ENCODE measurements at regions of chr3 and their contacts with region 1.

Region 1: DNA sequence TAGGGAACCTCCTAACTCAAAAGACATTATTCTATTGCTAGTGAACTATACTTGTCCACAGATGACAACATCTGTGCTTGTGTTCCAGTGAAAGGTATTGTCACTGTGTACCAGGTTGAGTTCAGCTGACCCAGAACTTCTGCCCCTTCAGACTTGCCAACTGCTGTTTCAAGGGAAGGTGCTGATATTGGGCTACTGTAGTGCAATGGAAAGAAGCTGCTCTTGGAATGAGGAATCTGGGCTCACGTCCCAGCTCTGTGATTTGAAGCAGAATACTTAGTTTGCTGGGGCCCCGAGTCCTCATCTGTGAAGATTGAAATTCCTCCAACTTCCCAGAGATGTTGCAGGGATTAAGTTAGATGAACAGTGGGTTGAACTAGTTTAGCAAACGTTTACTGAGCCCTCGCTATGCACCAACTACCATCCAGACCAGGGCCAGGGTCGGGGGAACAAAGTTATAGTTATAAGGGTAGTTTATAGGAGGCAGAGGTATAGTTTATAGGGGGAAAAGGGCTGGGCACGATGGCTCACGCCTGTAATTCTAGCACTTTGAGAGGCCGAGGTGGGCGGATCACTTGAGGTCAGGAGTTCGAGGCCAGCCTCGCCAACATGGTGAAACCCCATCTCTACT is 15.9 kb upstream of the UMPS start:
- DNase-seq: no peak
- H3K4me3 ChIP-seq: no peak overlapping the region
- H3K4me3 Mint-ChIP-seq: no peak overlapping the region
- H3K27ac Mint-ChIP-seq: peak overlapping the region; percentile 73
- H3K4me1 ChIP-seq: peaks cover 17% of the 10 kb centered on the region
- H3K4me1 Mint-ChIP-seq: peaks cover 25% of the 10 kb centered on the region
- H3K27me3 ChIP-seq: no peaks in the 10 kb centered on the region
- H3K27me3 Mint-ChIP-seq: no peaks in the 10 kb centered on the region
- CTCF ChIP-seq: no peak

Region 2: GRCh38 chr3:123960781-123961507 is 753.4 kb before region 1 on chr3 and contains the start of gene CCDC14:
- CTCF ChIA-PET with region 1: interaction called, 10 read pairs
- POLR2A ChIA-PET with region 1: no interaction called
- intact Hi-C with region 1: no loop called
- DNase-seq: peak; percentile 95 to 98
- H3K4me3 ChIP-seq: peak within 1 kb of the TSS; percentile 66
- H3K4me3 Mint-ChIP-seq: peak within 1 kb of the TSS; percentile 90
- H3K27ac Mint-ChIP-seq: peak within 1 kb of the TSS; percentile 95
- H3K4me1 ChIP-seq: no peaks in the 10 kb centered on the region
- H3K4me1 Mint-ChIP-seq: no peaks in the 10 kb centered on the region
- H3K27me3 ChIP-seq: no peaks in the 10 kb centered on the region
- H3K27me3 Mint-ChIP-seq: no peaks in the 10 kb centered on the region
- CTCF ChIP-seq: no peak
- total RNA-seq, gene CCDC14: 41.7 and 43.5 TPM in 2 replicates